Psoas muscle (tissue), 8 donors: ENCODE measurements at regions of chr4 and their contacts with region 1.

Region 1: DNA sequence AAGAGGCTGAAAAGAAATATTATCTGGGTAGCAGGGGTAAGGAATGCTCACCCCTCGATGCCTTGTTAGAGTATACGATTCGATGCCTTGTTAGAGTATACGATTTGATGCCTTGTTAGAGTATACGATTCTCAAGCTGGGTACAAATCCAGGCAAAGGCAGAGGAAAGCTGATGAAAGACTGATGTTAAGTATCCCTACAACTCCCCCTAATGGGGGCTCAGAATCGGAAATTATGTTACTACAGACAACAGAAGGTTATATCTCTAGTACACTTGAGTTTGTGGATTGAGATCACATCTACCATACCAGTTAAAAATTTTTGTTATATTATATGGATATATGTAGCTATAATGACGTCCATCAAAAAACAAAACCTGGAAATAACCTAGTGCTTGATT is 4.8 kb downstream of the LRRC66 start:
- DNase-seq: no peak
- ATAC-seq: no peak
- H3K4me3 ChIP-seq: no peak overlapping the region
- H3K27ac ChIP-seq: no peak overlapping the region
- H3K4me1 ChIP-seq: no peaks in the 10 kb centered on the region
- H3K27me3 ChIP-seq: no peaks in the 10 kb centered on the region
- CTCF ChIP-seq: no peak

Region 2: GRCh38 chr4:51842554-51843308 is 172.6 kb before region 1 on chr4 and contains the start of gene DCUN1D4:
- intact Hi-C with region 1: loop called in 1 of 2 experiments (anchors 5 kb)
- DNase-seq: peak; percentile 100
- ATAC-seq: peak; percentile 90 to 96 (median 92)
- H3K4me3 ChIP-seq: peak within 1 kb of the TSS; percentile 96
- H3K27ac ChIP-seq: peak within 1 kb of the TSS; percentile 95
- H3K4me1 ChIP-seq: peaks cover 18% of the 10 kb centered on the region
- H3K27me3 ChIP-seq: no peaks in the 10 kb centered on the region
- CTCF ChIP-seq: peak; percentile 40
- total RNA-seq, gene DCUN1D4: 24.0 to 43.1 (median 31.1) TPM

Region 3: DNA sequence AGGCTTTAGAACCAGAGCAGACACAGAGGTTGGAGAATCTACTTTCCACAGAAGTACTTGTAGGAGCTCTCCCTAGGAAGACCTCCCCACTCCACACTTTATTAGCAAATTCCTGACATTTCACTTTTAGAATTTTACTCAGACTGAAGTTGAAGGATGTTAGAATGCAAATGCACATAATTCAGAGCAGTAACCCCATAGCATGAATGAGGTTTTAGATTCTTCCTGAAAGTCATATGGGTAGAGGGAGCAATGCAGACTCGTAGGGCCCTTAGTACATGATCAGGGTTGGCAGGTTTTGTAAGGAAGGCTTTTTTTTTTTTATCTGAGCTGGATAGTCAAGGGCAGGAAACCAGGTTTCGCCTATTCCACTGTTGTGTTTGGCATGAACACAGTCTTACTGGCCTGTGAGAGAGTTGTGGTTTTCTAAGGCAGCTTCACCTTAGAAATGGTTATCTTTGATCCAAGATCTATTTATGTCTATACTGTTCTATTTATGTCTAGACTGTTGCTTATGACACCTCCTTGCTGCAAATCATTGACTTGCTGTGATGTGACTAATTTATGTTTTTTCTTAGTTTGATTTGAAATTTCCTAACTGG is 84.6 kb after region 1 on chr4:
- intact Hi-C with region 1: no loop called
- DNase-seq: no peak
- ATAC-seq: peak in 1 of 4 donors; percentile 52
- H3K4me3 ChIP-seq: no peak overlapping the region
- H3K27ac ChIP-seq: no peak overlapping the region
- H3K4me1 ChIP-seq: no peaks in the 10 kb centered on the region
- H3K27me3 ChIP-seq: no peaks in the 10 kb centered on the region
- CTCF ChIP-seq: no peak